CD8-positive, alpha-beta memory T cell (primary cell): ENCODE measurements at regions of chr5 and their contacts with region 1.

Region 1: DNA sequence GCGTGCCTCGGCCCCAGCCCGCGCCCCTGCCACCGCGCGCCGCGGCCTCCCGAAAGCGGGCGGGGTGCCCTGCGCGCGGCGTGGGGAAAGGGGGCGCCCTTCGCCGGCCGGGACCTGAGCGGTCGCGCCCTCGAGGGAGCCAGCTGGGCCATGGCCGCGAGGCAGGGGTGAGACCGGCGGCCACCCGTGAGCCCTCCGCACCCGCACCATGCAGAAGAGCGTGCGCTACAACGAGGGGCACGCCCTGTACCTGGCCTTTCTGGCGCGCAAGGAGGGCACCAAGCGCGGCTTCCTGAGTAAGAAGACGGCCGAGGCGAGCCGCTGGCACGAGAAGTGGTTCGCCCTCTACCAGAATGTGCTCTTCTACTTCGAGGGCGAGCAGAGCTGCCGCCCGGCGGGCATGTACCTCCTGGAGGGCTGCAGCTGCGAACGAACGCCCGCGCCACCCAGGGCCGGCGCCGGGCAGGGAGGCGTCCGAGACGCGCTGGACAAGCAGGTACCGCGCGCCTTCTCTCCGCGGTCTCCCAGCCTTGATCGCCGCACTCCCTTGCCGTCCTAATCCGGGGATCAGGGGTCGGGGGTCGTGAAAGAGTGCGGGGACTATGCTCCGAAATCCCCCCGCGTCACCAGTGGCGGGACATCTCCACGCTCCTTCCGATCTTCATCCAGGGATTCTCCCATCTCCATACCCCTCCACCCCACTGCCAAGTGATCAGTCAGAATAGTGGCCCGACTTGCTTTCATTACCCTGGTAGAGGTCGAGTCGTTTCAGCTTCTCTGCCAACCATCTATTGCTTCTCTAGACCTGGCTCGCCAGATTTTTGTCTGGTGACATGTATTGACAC is 590 bp downstream of the RASGRF2 start:
- DNase-seq: peak; percentile 13 to 64 (median 39)
- H3K4me3 ChIP-seq: peak overlapping the region; percentile 62
- H3K4me3 Mint-ChIP-seq: peak overlapping the region; percentile 85 to 99 (median 95)
- H3K27ac ChIP-seq: no peak overlapping the region
- H3K27ac Mint-ChIP-seq: peak overlapping the region; percentile 25 to 93 (median 87)
- H3K4me1 ChIP-seq: peaks cover 54% of the 10 kb centered on the region
- H3K4me1 Mint-ChIP-seq: peaks cover 48 to 71% (median 68%) of the 10 kb centered on the region in 3 donors
- H3K27me3 ChIP-seq: no peaks in the 10 kb centered on the region
- H3K27me3 Mint-ChIP-seq: peaks cover 4 to 5% of the 10 kb centered on the region in 2 donors

Region 2: GRCh38 chr5:80895523-80895922 is 65.2 kb before region 1 on chr5:
- CTCF ChIA-PET with region 1: no interaction called
- POLR2A ChIA-PET with region 1: no interaction called
- DNase-seq: no peak
- H3K4me3 ChIP-seq: no peak overlapping the region
- H3K4me3 Mint-ChIP-seq: no peak overlapping the region
- H3K27ac ChIP-seq: no peak overlapping the region
- H3K27ac Mint-ChIP-seq: no peak overlapping the region
- H3K4me1 ChIP-seq: no peaks in the 10 kb centered on the region
- H3K4me1 Mint-ChIP-seq: no peaks in the 10 kb centered on the region
- H3K27me3 ChIP-seq: no peaks in the 10 kb centered on the region
- H3K27me3 Mint-ChIP-seq: no peaks in the 10 kb centered on the region

Region 3: DNA sequence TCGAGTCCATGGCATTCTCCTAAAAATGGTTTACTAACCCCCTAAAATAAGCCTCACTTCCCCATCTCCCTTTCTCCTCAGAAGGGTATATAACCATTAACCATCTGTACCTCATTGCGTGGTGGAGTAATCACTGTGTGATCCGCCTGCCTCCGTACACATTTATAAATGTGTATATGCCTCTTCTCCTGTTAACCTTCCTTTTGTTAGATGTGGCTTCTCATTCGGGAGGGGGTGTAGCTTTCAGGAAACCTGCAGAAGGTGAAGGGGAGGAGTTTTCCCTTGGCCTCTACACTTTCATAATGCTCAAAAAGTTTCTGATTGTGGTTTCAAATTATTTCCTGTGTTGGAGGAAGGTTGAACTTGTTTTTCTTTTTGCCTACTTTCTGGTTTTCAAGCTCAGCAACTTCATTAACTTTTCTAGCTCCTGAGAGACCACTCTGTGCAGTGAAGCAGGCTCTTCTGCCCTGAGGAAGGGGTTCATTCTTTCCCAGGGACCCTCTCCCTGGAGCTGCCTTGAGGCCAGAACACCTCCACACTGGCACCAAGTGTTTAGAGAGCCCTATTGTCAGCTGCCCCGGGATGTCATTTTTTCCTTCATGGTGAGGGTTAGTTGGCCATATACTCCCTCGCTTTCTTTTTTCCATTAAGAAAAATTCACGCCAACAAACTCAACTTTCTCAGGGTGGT is 46.3 kb after region 1 on chr5:
- CTCF ChIA-PET with region 1: interaction called, 12 read pairs
- POLR2A ChIA-PET with region 1: interaction called, 10 read pairs
- DNase-seq: peak; percentile 7 to 85 (median 56)
- H3K4me3 ChIP-seq: peak overlapping the region; percentile 70
- H3K4me3 Mint-ChIP-seq: peak overlapping the region; percentile 65 to 89 (median 83)
- H3K27ac ChIP-seq: peak overlapping the region; percentile 34
- H3K27ac Mint-ChIP-seq: peak overlapping the region; percentile 76 to 99 (median 91)
- H3K4me1 ChIP-seq: peaks cover 74% of the 10 kb centered on the region
- H3K4me1 Mint-ChIP-seq: peaks cover 69 to 84% (median 70%) of the 10 kb centered on the region in 3 donors
- H3K27me3 ChIP-seq: no peaks in the 10 kb centered on the region
- H3K27me3 Mint-ChIP-seq: peaks cover 0 to 2% of the 10 kb centered on the region in 2 donors

Region 4: GRCh38 chr5:81121273-81121672 is 160.5 kb after region 1 on chr5:
- CTCF ChIA-PET with region 1: no interaction called
- POLR2A ChIA-PET with region 1: no interaction called
- DNase-seq: no peak
- H3K4me3 ChIP-seq: no peak overlapping the region
- H3K4me3 Mint-ChIP-seq: no peak overlapping the region
- H3K27ac ChIP-seq: no peak overlapping the region
- H3K27ac Mint-ChIP-seq: no peak overlapping the region
- H3K4me1 ChIP-seq: no peaks in the 10 kb centered on the region
- H3K4me1 Mint-ChIP-seq: peaks cover 14 to 17% (median 16%) of the 10 kb centered on the region in 3 donors
- H3K27me3 ChIP-seq: no peaks in the 10 kb centered on the region
- H3K27me3 Mint-ChIP-seq: no peaks in the 10 kb centered on the region